ENCODE measurements at regions of chr6 and their contacts with region 1.

Region 1: GRCh38 chr6:144095331-144096002 is at the start of gene SF3B5:
- DNase-seq: peak; percentile 99
- ATAC-seq: peak; percentile 97
- H3K4me3 ChIP-seq: peak within 1 kb of the TSS; percentile 63 to 98 (median 73)
- H3K4me3 Mint-ChIP-seq: peak within 1 kb of the TSS; percentile 100
- H3K27ac ChIP-seq: peak within 1 kb of the TSS; percentile 77 to 84
- H3K27ac Mint-ChIP-seq: peak within 1 kb of the TSS; percentile 100
- H3K4me1 ChIP-seq: peaks cover 16 to 22% of the 10 kb centered on the region in 2 donors
- H3K4me1 Mint-ChIP-seq: peaks cover 23% of the 10 kb centered on the region
- H3K27me3 ChIP-seq: no peaks in the 10 kb centered on the region
- H3K27me3 Mint-ChIP-seq: no peaks in the 10 kb centered on the region
- CTCF ChIP-seq: no peak
- total RNA-seq, gene SF3B5: 104 and 111 TPM in 2 replicates

Region 2: GRCh38 chr6:143536865-143537691 is 558.4 kb before region 1 on chr6:
- CTCF ChIA-PET with region 1: no interaction called
- POLR2A ChIA-PET with region 1: no interaction called
- intact Hi-C with region 1: loop called (anchors 2 kb)
- DNase-seq: peak; percentile 75
- ATAC-seq: peak; percentile 65
- H3K4me3 ChIP-seq: peak overlapping the region; percentile 28 to 67 (median 56)
- H3K4me3 Mint-ChIP-seq: peak overlapping the region; percentile 86
- H3K27ac ChIP-seq: no peak overlapping the region
- H3K27ac Mint-ChIP-seq: peak overlapping the region; percentile 78
- H3K4me1 ChIP-seq: peaks cover 22 to 31% of the 10 kb centered on the region in 2 donors
- H3K4me1 Mint-ChIP-seq: peaks cover 29% of the 10 kb centered on the region
- H3K27me3 ChIP-seq: no peaks in the 10 kb centered on the region
- H3K27me3 Mint-ChIP-seq: no peaks in the 10 kb centered on the region
- CTCF ChIP-seq: peak; percentile 22

Region 3: GRCh38 chr6:143575440-143575839 is 520.0 kb before region 1 on chr6:
- CTCF ChIA-PET with region 1: interaction called, 7 read pairs
- POLR2A ChIA-PET with region 1: no interaction called
- intact Hi-C with region 1: loop called (anchors 10 kb)
- DNase-seq: peak; percentile 76
- ATAC-seq: peak; percentile 98
- H3K4me3 ChIP-seq: no peak overlapping the region
- H3K4me3 Mint-ChIP-seq: no peak overlapping the region
- H3K27ac ChIP-seq: no peak overlapping the region
- H3K27ac Mint-ChIP-seq: no peak overlapping the region
- H3K4me1 ChIP-seq: no peaks in the 10 kb centered on the region
- H3K4me1 Mint-ChIP-seq: no peaks in the 10 kb centered on the region
- H3K27me3 ChIP-seq: no peaks in the 10 kb centered on the region
- H3K27me3 Mint-ChIP-seq: no peaks in the 10 kb centered on the region
- CTCF ChIP-seq: peak; percentile 95

Region 4: DNA sequence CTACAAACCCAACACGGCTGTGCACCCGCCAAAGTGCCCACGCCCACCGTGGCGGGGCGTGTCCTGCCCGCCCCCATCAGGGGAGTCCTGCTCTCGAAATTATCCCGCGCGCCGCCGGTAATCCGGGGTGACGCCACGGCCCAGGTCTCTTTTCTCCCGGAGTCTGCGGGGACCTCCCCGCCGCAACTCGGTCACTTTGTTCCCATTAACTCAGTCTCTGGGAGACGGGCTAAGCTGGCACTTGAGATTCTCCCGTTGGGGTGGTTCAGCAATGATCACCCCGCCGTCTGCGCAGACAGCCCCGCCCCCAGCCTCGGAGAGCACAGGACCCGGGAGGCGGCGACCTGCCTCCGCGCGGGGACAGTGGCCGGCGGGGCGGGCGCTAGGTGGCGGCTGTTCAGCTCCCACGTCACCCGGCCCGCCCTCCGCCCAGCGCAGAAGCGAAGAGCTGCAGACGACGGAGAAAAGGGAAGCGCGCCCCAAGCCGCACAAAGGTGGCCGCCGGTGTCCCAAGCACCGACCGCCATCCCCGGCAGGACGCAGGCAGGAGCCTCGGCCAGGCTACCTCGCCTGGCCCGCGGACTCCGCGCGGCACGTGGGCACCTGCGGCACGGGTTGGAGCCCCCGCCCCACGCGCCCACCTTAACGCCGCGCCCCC is 31.6 kb before region 1 on chr6:
- CTCF ChIA-PET with region 1: interaction called, 6 read pairs
- POLR2A ChIA-PET with region 1: interaction called, 23 read pairs
- intact Hi-C with region 1: loop called (anchors 1 kb)
- DNase-seq: peak; percentile 97
- ATAC-seq: peak; percentile 91
- H3K4me3 ChIP-seq: peak overlapping the region; percentile 74 to 86 (median 82)
- H3K4me3 Mint-ChIP-seq: peak overlapping the region; percentile 90
- H3K27ac ChIP-seq: peak overlapping the region; percentile 88 to 96
- H3K27ac Mint-ChIP-seq: peak overlapping the region; percentile 92
- H3K4me1 ChIP-seq: peaks cover 21 to 32% of the 10 kb centered on the region in 2 donors
- H3K4me1 Mint-ChIP-seq: peaks cover 37% of the 10 kb centered on the region
- H3K27me3 ChIP-seq: no peaks in the 10 kb centered on the region
- H3K27me3 Mint-ChIP-seq: no peaks in the 10 kb centered on the region
- CTCF ChIP-seq: peak; percentile 14

Region 5: GRCh38 chr6:144362042-144363018 is 266.9 kb after region 1 on chr6:
- CTCF ChIA-PET with region 1: no interaction called
- POLR2A ChIA-PET with region 1: no interaction called
- intact Hi-C with region 1: no loop called
- DNase-seq: no peak
- ATAC-seq: no peak
- H3K4me3 ChIP-seq: no peak overlapping the region
- H3K4me3 Mint-ChIP-seq: no peak overlapping the region
- H3K27ac ChIP-seq: no peak overlapping the region
- H3K27ac Mint-ChIP-seq: no peak overlapping the region
- H3K4me1 ChIP-seq: peaks cover 20 to 27% of the 10 kb centered on the region in 2 donors
- H3K4me1 Mint-ChIP-seq: peaks cover 61% of the 10 kb centered on the region
- H3K27me3 ChIP-seq: no peaks in the 10 kb centered on the region
- H3K27me3 Mint-ChIP-seq: no peaks in the 10 kb centered on the region
- CTCF ChIP-seq: no peak

Measured in B cell (primary cell).